Thyroid gland (tissue), 4 donors: ENCODE measurements at regions of chr3 and their contacts with region 1.

Region 1: DNA sequence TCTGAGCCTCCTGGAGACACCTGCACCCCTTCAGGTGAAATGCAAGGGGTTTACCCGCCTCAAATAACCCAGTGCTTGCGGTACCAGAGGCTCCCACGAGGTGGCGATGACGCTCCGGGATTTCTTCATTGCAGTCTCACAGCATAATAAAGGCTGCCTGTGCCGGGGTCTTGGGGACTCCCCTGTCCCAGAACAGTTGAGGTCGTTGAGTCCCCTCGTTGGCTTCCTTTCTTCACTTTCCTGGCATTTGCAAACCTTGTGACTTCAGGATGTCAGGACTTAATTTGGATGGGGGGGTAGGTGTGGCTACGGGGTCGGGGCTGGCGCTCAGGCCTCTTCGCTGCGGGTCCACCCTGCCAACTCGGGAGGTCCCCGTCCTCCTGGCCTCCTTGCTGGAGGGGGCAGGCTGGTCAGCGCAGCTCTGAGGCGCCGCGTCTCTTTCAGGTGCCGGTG is 1.3 kb downstream of the GNAT1 start:
- DNase-seq: peak; percentile 70 to 74
- H3K4me3 ChIP-seq: no peak overlapping the region
- H3K27ac ChIP-seq: no peak overlapping the region
- H3K4me1 ChIP-seq: peaks cover 0 to 19% of the 10 kb centered on the region in 2 donors
- H3K27me3 ChIP-seq: peaks cover 18% of the 10 kb centered on the region
- CTCF ChIP-seq: peak; percentile 79 to 93 (median 86)
- POLR2A ChIP-seq: no peak

Region 2: GRCh38 chr3:49939858-49940666 is 252.7 kb before region 1 on chr3 and contains the start of gene RBM6:
- intact Hi-C with region 1: no loop called
- DNase-seq: peak; percentile 99
- H3K4me3 ChIP-seq: peak within 1 kb of the TSS; percentile 15 to 70 (median 38)
- H3K27ac ChIP-seq: peak within 1 kb of the TSS; percentile 51 to 94 (median 81)
- H3K4me1 ChIP-seq: peaks cover 7 to 11% of the 10 kb centered on the region in 2 donors
- H3K27me3 ChIP-seq: no peaks in the 10 kb centered on the region
- CTCF ChIP-seq: peak in 1 of 6 experiments; percentile 1
- POLR2A ChIP-seq: peak in 1 of 2 donors; percentile 85
- total RNA-seq, gene RBM6: 113 to 148 (median 129) TPM

Region 3: GRCh38 chr3:50121416-50122032 is 71.2 kb before region 1 on chr3:
- intact Hi-C with region 1: loop called (anchors 2 kb)
- DNase-seq: peak; percentile 80 to 83
- H3K4me3 ChIP-seq: no peak overlapping the region
- H3K27ac ChIP-seq: no peak overlapping the region
- H3K4me1 ChIP-seq: peaks cover 19 to 35% of the 10 kb centered on the region in 2 donors
- H3K27me3 ChIP-seq: no peaks in the 10 kb centered on the region
- CTCF ChIP-seq: peak; percentile 74 to 96 (median 83)
- POLR2A ChIP-seq: no peak

Region 4: GRCh38 chr3:50227390-50228183 is 34.9 kb after region 1 on chr3:
- intact Hi-C with region 1: loop called (anchors 1 kb)
- DNase-seq: peak; percentile 97
- H3K4me3 ChIP-seq: peak overlapping the region; percentile 9 to 57 (median 46)
- H3K27ac ChIP-seq: peak overlapping the region; percentile 43 to 71 (median 54)
- H3K4me1 ChIP-seq: peaks cover 15 to 19% of the 10 kb centered on the region in 2 donors
- H3K27me3 ChIP-seq: no peaks in the 10 kb centered on the region
- CTCF ChIP-seq: peak; percentile 41 to 97 (median 85)
- POLR2A ChIP-seq: peak in 1 of 2 donors; percentile 53

Region 5: DNA sequence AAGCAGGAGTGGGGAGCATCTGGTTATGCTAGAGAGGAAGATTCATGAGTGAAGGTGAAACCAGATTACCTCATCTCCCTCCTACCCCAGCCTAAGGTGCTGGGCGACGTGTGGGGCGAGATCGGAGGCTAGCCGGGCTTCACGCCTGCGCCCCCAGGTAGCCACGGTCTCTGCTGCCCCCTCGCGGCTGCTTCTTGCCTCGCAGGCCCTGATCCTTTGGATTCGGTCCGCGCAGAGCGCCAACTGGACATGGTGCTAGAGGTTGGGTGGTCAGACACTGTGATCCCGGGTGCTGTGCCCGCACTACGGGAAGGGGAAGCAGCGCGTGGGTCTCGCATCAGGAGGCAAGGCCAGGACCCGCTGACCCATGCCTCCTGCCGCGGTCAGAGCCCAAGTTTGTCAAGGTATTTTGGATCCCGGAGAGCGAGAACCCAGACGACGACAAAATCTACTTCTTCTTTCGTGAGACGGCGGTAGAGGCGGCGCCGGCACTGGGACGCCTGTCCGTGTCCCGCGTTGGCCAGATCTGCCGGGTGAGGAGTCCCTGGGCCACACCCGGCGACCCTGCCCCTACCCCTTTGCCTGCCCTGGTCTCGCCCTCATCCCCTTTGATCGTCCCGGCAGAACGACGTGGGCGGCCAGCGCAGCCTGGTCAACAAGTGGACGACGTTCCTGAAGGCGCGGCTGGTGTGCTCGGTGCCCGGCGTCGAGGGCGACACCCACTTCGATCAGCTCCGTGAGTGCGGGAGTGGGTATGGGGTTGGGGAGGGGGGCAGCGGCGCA is 80.4 kb after region 1 on chr3:
- intact Hi-C with region 1: loop called (anchors 2 kb)
- DNase-seq: peak; percentile 84 to 88
- H3K4me3 ChIP-seq: peak overlapping the region in 1 of 3 donors; percentile 13
- H3K27ac ChIP-seq: peak overlapping the region in 1 of 3 donors; percentile 43
- H3K4me1 ChIP-seq: peaks cover 28 to 48% of the 10 kb centered on the region in 2 donors
- H3K27me3 ChIP-seq: no peaks in the 10 kb centered on the region
- CTCF ChIP-seq: peak; percentile 95 to 99 (median 97)
- POLR2A ChIP-seq: peak in 1 of 2 donors; percentile 17